Activated naive CD4-positive, alpha-beta T cell treated with anti-CD3 and anti-CD28 coated beads for 36 hours (primary cell): ENCODE measurements at regions of chr5 and their contacts with region 1.

Region 1: DNA sequence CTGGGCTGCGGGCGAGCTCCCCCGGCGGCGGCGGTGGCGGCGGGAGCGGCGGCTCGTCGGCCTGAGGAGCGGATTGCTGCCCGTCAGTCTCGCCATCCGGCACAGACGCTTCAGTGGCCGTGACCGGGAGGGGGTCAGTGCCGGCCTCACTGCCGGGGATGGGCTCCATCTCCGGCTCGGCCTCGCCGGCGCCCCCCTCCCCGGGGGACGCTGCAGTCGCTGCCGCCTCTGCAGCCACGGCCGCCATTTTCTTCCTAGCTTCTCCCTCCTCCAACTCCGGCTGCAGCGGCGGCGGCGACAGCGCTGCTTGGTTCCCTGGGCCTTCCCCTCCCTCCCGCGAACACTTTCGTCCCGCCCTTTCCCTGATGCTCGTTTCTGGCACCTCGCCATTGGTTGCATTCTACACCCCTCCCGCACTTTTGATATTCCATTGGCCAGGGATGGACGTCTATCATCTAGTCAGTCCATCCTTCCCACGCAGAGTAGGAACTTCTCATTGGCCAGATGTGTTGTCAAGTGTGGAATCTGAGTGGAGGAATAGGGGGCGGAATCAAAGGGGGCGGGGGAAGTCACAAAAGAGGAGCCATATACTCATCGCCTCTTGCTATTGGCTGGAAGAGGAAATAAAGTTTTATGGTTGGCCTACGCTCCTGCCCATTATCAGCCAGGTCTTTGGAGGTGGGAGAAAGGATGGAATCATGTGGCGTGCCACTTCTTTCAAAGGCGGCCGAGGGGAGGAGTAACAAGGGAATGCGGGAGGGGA is at the start of gene PWWP2A:
- DNase-seq: peak; percentile 99
- H3K4me3 Mint-ChIP-seq: peak within 1 kb of the TSS; percentile 97
- H3K27ac Mint-ChIP-seq: peak within 1 kb of the TSS; percentile 92
- H3K4me1 Mint-ChIP-seq: peaks cover 13% of the 10 kb centered on the region
- H3K27me3 Mint-ChIP-seq: no peaks in the 10 kb centered on the region
- total RNA-seq, gene PWWP2A: 14.8 to 15.8 TPM

Region 2: GRCh38 chr5:159864885-159865691 is 254.2 kb before region 1 on chr5:
- CTCF ChIA-PET with region 1: no interaction called
- intact Hi-C with region 1: loop called (anchors 1 kb)
- DNase-seq: no peak
- H3K4me3 Mint-ChIP-seq: no peak overlapping the region
- H3K27ac Mint-ChIP-seq: no peak overlapping the region
- H3K4me1 Mint-ChIP-seq: peaks cover 5% of the 10 kb centered on the region
- H3K27me3 Mint-ChIP-seq: peaks cover 43% of the 10 kb centered on the region

Region 3: GRCh38 chr5:160008877-160009590 is 110.3 kb before region 1 on chr5 and contains the start of gene TTC1:
- CTCF ChIA-PET with region 1: no interaction called
- intact Hi-C with region 1: loop called (anchors 1 kb)
- DNase-seq: peak; percentile 98
- H3K4me3 Mint-ChIP-seq: peak within 1 kb of the TSS; percentile 98
- H3K27ac Mint-ChIP-seq: peak within 1 kb of the TSS; percentile 94
- H3K4me1 Mint-ChIP-seq: peaks cover 27% of the 10 kb centered on the region
- H3K27me3 Mint-ChIP-seq: no peaks in the 10 kb centered on the region
- total RNA-seq, gene TTC1: 46.0 to 47.1 TPM

Region 4: DNA sequence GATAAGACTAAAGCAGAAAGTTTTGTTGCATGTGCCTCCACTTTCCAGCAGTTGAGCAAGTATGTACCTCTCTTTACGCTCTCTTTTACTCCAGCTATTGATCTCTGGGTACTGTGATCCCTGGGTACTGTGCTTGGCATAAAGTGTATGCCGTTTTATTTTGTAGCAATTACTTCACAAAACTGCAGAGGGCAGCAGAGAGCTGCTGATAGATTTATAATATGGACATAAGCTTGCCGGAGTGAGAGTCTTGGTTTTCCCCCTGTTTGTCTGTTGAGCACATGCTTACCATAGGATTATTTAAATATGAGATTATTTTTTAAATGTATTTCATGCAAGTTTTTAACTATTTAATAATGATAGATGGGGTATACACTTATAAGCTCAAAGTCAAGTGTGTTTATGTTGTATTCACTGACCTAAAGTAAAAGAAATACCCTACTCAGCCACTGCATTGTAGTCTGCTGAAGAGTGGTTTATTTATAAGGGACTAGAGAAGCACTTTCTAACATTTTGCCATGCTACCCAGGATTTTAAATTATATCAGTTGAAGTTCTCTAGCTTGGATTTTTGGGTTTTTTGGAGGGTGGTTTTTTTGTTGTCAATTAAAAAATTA is 97.4 kb before region 1 on chr5:
- CTCF ChIA-PET with region 1: interaction called, 3 read pairs
- intact Hi-C with region 1: loop called (anchors 1 kb)
- DNase-seq: peak; percentile 70
- H3K4me3 Mint-ChIP-seq: no peak overlapping the region
- H3K27ac Mint-ChIP-seq: no peak overlapping the region
- H3K4me1 Mint-ChIP-seq: peaks cover 24% of the 10 kb centered on the region
- H3K27me3 Mint-ChIP-seq: no peaks in the 10 kb centered on the region

Region 5: DNA sequence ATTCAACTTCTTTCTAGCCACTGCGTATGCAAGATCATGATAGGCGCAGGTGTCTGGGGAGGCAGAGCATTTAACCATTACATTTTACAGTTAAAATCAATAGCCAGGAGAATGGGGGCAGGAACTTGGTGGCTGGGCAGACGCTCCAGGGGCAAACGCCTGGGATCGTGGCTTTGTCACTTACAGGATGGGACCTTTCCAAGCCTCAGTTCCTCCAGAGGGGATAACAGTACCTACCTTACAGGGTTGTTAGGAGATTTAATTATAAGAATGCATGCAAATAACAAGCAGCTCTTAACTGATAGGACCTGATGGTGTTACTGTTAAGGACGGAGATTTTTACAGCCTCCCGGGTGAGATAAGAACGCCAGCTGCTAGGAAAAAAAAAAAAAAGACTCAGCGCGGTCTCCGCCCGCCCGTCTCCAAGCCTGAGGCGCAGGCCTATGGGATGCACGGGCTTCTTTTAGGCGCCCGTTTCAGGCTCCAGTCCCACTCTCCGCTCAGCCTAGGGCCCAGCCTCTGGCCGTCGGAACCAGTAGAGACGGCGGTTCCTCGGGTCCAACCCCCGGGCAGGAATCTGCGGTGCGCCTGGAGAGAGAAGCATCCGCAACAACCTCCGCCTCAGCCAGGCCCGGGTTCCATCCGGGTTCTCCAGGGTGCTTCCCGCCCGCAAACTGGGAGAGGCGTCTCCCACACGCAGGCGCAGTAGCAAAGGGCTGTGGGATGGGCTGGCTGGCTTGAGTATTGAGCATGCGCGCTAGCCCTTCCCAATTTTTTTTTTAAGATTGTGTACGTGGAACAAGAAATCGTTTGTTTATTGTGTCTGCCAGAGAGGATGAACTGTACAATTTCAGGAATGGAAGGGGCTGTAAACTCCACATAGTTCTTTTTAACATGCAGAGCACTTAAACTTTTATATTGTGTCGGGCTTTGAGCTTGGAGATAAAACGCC is 280.4 kb after region 1 on chr5 and contains the start of gene FAM200C:
- CTCF ChIA-PET with region 1: no interaction called
- intact Hi-C with region 1: loop called (anchors 1 kb)
- DNase-seq: peak; percentile 84
- H3K4me3 Mint-ChIP-seq: peak within 1 kb of the TSS; percentile 79
- H3K27ac Mint-ChIP-seq: peak within 1 kb of the TSS; percentile 21
- H3K4me1 Mint-ChIP-seq: peaks cover 12% of the 10 kb centered on the region
- H3K27me3 Mint-ChIP-seq: no peaks in the 10 kb centered on the region
- total RNA-seq, gene FAM200C: 0.84 to 0.93 TPM

Region 6: DNA sequence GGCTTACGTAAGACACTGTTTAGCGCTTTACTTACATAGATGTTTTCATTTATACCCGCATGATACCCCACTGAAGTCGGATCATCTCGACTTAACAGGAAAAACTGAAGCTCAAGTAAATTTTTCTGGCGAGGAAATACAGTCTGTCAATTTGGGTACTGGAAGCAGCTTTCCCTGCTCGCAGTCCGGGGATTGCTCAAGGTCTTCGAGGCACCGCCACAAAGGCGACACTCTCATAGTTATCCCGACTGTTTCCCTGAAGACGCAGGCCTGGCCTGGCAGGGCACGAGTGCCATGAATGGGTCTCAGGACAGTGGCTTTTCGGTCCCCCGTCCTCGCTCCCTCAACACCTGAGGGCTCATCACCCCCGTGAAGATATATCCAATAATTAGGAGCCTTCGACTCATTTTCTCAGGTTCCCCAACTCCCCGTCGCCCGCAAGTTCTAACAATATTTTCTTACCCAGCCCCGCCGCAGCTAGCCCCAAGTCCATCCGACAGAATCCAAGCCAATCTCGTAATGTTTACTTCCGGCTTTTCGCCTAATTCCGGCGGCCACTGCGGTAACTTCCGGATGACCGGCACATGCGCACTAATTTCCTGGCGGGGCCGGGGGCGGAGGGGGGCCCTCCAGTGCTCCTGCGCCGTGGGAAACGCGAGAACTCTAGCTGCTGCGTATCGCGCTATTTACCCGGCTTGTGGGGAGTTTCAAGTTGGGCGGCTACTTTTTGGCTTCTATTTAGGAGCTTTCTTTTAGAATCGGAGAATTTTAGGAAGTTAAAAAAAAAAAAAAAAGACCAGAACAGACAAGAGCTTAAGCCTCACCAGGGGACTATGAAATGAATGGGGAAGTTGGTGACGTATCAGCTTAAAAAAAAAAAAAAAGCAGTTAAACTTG is 299.5 kb after region 1 on chr5 and contains the start of gene SLU7:
- CTCF ChIA-PET with region 1: no interaction called
- intact Hi-C with region 1: loop called (anchors 1 kb)
- DNase-seq: peak; percentile 96
- H3K4me3 Mint-ChIP-seq: peak within 1 kb of the TSS; percentile 97
- H3K27ac Mint-ChIP-seq: peak within 1 kb of the TSS; percentile 94
- H3K4me1 Mint-ChIP-seq: peaks cover 43% of the 10 kb centered on the region
- H3K27me3 Mint-ChIP-seq: no peaks in the 10 kb centered on the region
- total RNA-seq, gene SLU7: 33.2 to 34.3 TPM

Region 7: GRCh38 chr5:160467555-160468362 is 348.4 kb after region 1 on chr5:
- CTCF ChIA-PET with region 1: no interaction called
- intact Hi-C with region 1: loop called (anchors 2 kb)
- DNase-seq: peak; percentile 87
- H3K4me3 Mint-ChIP-seq: peak overlapping the region; percentile 99
- H3K27ac Mint-ChIP-seq: peak overlapping the region; percentile 98
- H3K4me1 Mint-ChIP-seq: peaks cover 72% of the 10 kb centered on the region
- H3K27me3 Mint-ChIP-seq: no peaks in the 10 kb centered on the region